GM12878 (cell line): ENCODE measurements at regions of chr9 and their contacts with region 1.

Region 1: GRCh38 chr9:128927731-128928411 is 7.1 kb downstream of the PHYHD1 start:
- DNase-seq: peak; percentile 9
- ATAC-seq: peak; percentile 94
- H3K4me3 ChIP-seq: no peak overlapping the region
- H3K27ac ChIP-seq: no peak overlapping the region
- H3K4me1 ChIP-seq: no peaks in the 10 kb centered on the region
- H3K27me3 ChIP-seq: no peaks in the 10 kb centered on the region
- CTCF ChIP-seq: peak; percentile 82 to 95 (median 87)
- EP300 ChIP-seq: no peak
- POLR2A ChIP-seq: no peak
- RAD21 ChIP-seq: peak; percentile 95

Region 2: GRCh38 chr9:128643519-128644300 is 284.2 kb before region 1 on chr9:
- CTCF ChIA-PET with region 1: interaction called, 5 read pairs
- POLR2A ChIA-PET with region 1: interaction called, 4 read pairs
- RAD21 ChIA-PET with region 1: no interaction called
- SMC1A ChIA-PET with region 1: no interaction called
- in situ Hi-C with region 1: no loop called
- intact Hi-C with region 1: loop called (anchors 5 kb)
- DNase-seq: peak; percentile 80
- ATAC-seq: peak; percentile 88
- H3K4me3 ChIP-seq: no peak overlapping the region
- H3K27ac ChIP-seq: peak overlapping the region; percentile 95
- H3K4me1 ChIP-seq: peaks cover 11% of the 10 kb centered on the region
- H3K27me3 ChIP-seq: no peaks in the 10 kb centered on the region
- CTCF ChIP-seq: no peak
- EP300 ChIP-seq: no peak
- POLR2A ChIP-seq: peak; percentile 73
- RAD21 ChIP-seq: no peak

Region 3: DNA sequence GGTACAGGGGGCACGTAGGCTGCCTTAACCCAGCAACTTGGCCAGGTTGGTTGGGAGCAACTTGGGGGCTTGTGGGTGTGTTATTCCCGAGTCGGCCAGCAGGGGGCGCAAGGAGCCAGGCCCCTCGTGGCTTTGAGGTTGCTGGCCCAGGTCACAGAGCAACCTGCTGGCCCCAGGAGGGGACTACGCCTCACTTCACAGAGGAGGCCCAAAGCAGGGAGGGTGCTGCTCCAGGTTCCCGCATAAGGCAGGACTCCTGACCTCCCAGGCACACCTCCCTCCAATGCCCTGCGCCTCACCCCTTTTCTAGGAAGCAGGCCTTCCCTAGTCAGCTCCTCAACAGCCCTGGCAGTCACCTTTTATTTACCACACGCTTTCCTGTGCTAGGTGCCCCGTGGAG is 64.2 kb before region 1 on chr9:
- CTCF ChIA-PET with region 1: interaction called, 158 read pairs
- POLR2A ChIA-PET with region 1: interaction called, 3 read pairs
- RAD21 ChIA-PET with region 1: interaction called, 23 read pairs
- SMC1A ChIA-PET with region 1: interaction called, 53 read pairs
- in situ Hi-C with region 1: loop called (anchors 5 kb)
- intact Hi-C with region 1: loop called (anchors 1 kb)
- DNase-seq: peak; percentile 13
- ATAC-seq: peak; percentile 100
- H3K4me3 ChIP-seq: no peak overlapping the region
- H3K27ac ChIP-seq: no peak overlapping the region
- H3K4me1 ChIP-seq: no peaks in the 10 kb centered on the region
- H3K27me3 ChIP-seq: no peaks in the 10 kb centered on the region
- CTCF ChIP-seq: peak; percentile 94 to 98 (median 95)
- EP300 ChIP-seq: no peak
- POLR2A ChIP-seq: no peak
- RAD21 ChIP-seq: peak; percentile 77

Region 4: GRCh38 chr9:128875790-128876160 is 52.1 kb before region 1 on chr9:
- CTCF ChIA-PET with region 1: interaction called, 158 read pairs
- POLR2A ChIA-PET with region 1: no interaction called
- RAD21 ChIA-PET with region 1: interaction called, 14 read pairs
- SMC1A ChIA-PET with region 1: interaction called, 3 read pairs
- in situ Hi-C with region 1: no loop called
- intact Hi-C with region 1: loop called (anchors 5 kb)
- DNase-seq: no peak
- ATAC-seq: no peak
- H3K4me3 ChIP-seq: no peak overlapping the region
- H3K27ac ChIP-seq: no peak overlapping the region
- H3K4me1 ChIP-seq: no peaks in the 10 kb centered on the region
- H3K27me3 ChIP-seq: no peaks in the 10 kb centered on the region
- CTCF ChIP-seq: no peak
- EP300 ChIP-seq: no peak
- POLR2A ChIP-seq: no peak
- RAD21 ChIP-seq: no peak

Region 5: GRCh38 chr9:128881901-128882681 is 45.8 kb before region 1 on chr9 and contains the starts of genes KYAT1 and LRRC8A:
- CTCF ChIA-PET with region 1: interaction called, 17 read pairs
- POLR2A ChIA-PET with region 1: interaction called, 3 read pairs
- RAD21 ChIA-PET with region 1: interaction called, 14 read pairs
- SMC1A ChIA-PET with region 1: no interaction called
- in situ Hi-C with region 1: no loop called
- intact Hi-C with region 1: loop called (anchors 5 kb)
- DNase-seq: peak; percentile 85
- ATAC-seq: peak; percentile 97
- H3K4me3 ChIP-seq: peak within 1 kb of the TSS; percentile 100
- H3K27ac ChIP-seq: peak within 1 kb of the TSS; percentile 86
- H3K4me1 ChIP-seq: no peaks in the 10 kb centered on the region
- H3K27me3 ChIP-seq: no peaks in the 10 kb centered on the region
- CTCF ChIP-seq: no peak; a peak in 1 of 6 replicates
- EP300 ChIP-seq: no peak
- POLR2A ChIP-seq: peak; percentile 82
- RAD21 ChIP-seq: no peak
- polyA plus RNA-seq, gene KYAT1: 5.8 to 6.2 TPM
- polyA plus RNA-seq, gene LRRC8A: 1.6 to 2.3 TPM